ENCODE measurements at regions of chr14 and their contacts with region 1.

Region 1: GRCh38 chr14:63543000-63543825 is at the start of gene PPP2R5E:
- DNase-seq: peak; percentile 99
- H3K4me3 ChIP-seq: peak within 1 kb of the TSS; percentile 72 to 100 (median 94)
- H3K27ac ChIP-seq: peak within 1 kb of the TSS; percentile 86 to 97 (median 96)
- H3K4me1 ChIP-seq: peaks cover 0 to 34% (median 19%) of the 10 kb centered on the region in 4 donors
- H3K27me3 ChIP-seq: no peaks in the 10 kb centered on the region
- CTCF ChIP-seq: no peak
- EP300 ChIP-seq: no peak
- POLR2A ChIP-seq: peak; percentile 66 to 74
- total RNA-seq, gene PPP2R5E: 23.7 to 28.9 (median 25.4) TPM

Region 2: GRCh38 chr14:63388763-63389431 is 154.3 kb before region 1 on chr14:
- intact Hi-C with region 1: loop called (anchors 1 kb)
- DNase-seq: peak; percentile 78
- H3K4me3 ChIP-seq: no peak overlapping the region
- H3K27ac ChIP-seq: no peak overlapping the region
- H3K4me1 ChIP-seq: no peaks in the 10 kb centered on the region
- H3K27me3 ChIP-seq: no peaks in the 10 kb centered on the region
- CTCF ChIP-seq: peak; percentile 74 to 80 (median 76)
- EP300 ChIP-seq: no peak
- POLR2A ChIP-seq: no peak

Region 3: DNA sequence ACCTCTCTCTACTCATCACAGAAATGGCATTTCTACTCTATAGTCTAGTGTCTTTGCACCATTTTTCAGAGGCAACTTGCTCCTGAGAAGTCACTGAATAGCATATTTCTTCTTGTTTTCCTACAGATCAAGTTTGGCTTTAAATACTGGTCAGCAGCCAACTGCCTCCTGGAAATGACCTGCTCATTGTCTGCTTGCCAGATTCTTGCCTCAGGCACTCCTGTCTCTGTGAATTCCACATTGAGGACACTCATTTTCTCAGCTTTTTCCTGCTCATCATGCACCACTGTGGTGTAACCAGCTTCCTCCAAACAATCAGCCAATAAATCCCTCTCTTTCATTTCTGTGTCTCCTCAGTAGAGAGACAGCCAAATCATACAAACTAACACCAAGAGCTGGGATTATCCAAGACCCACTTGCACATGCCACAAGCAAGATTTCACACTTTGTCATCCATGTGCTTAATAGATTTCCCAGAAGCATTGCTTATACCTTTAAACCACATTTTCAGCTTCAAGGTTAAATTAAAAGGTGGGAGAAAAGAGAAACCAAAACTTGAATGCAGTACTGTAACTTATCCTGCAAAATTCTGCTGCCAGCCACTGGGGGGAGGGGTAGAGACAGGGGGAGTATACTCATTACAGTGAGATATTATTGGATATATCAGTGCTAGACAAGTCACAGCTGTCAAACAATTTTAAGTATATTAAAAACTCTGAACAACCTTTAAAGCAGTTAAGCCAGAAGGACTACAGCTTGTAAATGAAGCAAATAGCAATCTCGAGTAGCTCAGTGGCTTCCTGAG is 105.1 kb before region 1 on chr14:
- intact Hi-C with region 1: loop called (anchors 5 kb)
- DNase-seq: peak; percentile 85
- H3K4me3 ChIP-seq: peak overlapping the region in 1 of 4 donors; percentile 30
- H3K27ac ChIP-seq: peak overlapping the region; percentile 69 to 81 (median 79)
- H3K4me1 ChIP-seq: peaks cover 0 to 71% (median 55%) of the 10 kb centered on the region in 4 donors
- H3K27me3 ChIP-seq: no peaks in the 10 kb centered on the region
- CTCF ChIP-seq: peak in 3 of 4 experiments; percentile 12 to 14 (median 12)
- EP300 ChIP-seq: peak in 2 of 4 donors; percentile 8 to 30
- POLR2A ChIP-seq: no peak

Region 4: GRCh38 chr14:63478010-63478409 is 65.2 kb before region 1 on chr14:
- intact Hi-C with region 1: no loop called
- DNase-seq: no peak
- H3K4me3 ChIP-seq: peak overlapping the region in 1 of 4 donors; percentile 7
- H3K27ac ChIP-seq: peak overlapping the region in 1 of 4 donors; percentile 32
- H3K4me1 ChIP-seq: peaks cover 0 to 50% (median 38%) of the 10 kb centered on the region in 4 donors
- H3K27me3 ChIP-seq: no peaks in the 10 kb centered on the region
- CTCF ChIP-seq: no peak
- EP300 ChIP-seq: no peak
- POLR2A ChIP-seq: no peak

Region 5: DNA sequence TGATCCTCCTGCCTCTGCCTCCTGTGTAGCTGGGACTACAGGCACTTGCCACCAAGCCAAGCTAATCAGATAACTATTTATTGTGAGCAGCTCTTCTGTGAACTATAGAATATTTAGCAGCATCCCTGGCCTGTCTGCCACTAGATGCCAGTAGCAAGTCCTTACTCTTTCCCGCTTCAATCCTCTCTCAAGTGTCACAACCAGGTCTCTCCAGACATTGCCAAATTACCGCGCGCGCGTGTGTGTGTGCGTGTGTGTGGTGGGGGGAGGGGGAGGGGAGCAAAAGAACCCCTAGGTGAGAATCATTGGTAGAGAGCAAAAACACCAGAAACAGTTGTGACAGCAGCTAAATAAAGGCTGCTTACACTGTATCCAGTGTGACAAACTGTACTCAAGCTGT is 50.0 kb before region 1 on chr14:
- intact Hi-C with region 1: loop called (anchors 5 kb)
- DNase-seq: no peak
- H3K4me3 ChIP-seq: no peak overlapping the region
- H3K27ac ChIP-seq: peak overlapping the region in 2 of 4 donors; percentile 1 to 48
- H3K4me1 ChIP-seq: peaks cover 0 to 61% (median 49%) of the 10 kb centered on the region in 4 donors
- H3K27me3 ChIP-seq: no peaks in the 10 kb centered on the region
- CTCF ChIP-seq: no peak
- EP300 ChIP-seq: no peak
- POLR2A ChIP-seq: no peak

Region 6: DNA sequence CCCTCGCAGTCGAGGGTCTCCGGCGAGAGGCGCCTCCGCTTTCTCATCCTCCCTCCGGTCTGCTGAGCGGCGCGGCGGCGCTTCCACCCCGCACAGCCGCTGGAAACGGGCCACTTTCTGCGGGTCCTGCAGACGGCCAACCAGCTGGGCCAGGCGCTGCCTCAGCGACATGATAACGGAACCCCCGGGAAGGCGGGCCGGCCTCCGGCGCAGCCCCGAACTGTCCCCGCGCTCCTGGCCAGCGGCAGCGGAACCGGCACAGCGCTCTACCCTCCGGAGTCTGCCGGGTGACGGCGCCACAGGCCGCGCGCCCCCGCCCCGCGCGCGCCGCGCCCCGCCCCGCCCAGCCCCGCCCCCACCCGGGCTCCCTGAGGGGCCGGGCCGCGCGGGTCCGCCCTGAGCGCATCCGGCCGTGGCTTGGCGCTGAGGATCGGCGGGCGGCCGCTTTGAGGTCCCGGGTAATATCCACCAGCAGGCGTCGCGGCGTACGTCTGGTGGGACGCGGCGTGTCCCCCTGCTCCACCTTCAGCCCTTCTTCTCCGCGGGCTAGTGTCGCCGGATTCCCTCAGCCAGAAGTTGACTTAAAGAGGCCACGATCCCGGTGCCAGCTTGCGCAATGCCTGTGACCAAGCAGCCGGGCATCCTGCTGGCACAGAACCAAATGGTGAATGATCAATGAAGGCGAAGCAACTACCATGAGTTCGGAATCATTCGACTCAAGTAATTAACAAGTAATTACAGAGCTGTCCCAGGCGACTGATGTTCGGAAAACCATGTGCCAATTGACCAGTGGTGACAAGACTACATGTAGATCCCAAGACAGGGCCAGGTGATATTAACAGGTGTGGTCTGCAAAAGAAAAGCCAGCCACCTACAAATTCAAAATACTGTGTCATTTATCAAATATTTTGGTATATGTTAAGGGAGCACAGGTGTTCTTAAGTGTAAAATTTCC is 184.8 kb after region 1 on chr14 and contains the start of gene SGPP1:
- intact Hi-C with region 1: loop called (anchors 5 kb)
- DNase-seq: peak; percentile 89
- H3K4me3 ChIP-seq: peak within 1 kb of the TSS; percentile 92 to 100 (median 96)
- H3K27ac ChIP-seq: peak within 1 kb of the TSS; percentile 86 to 93 (median 93)
- H3K4me1 ChIP-seq: peaks cover 0 to 25% (median 17%) of the 10 kb centered on the region in 4 donors
- H3K27me3 ChIP-seq: no peaks in the 10 kb centered on the region
- CTCF ChIP-seq: peak in 3 of 4 experiments; percentile 13 to 36 (median 32)
- EP300 ChIP-seq: no peak
- POLR2A ChIP-seq: peak; percentile 30 to 33
- total RNA-seq, gene SGPP1: 18.2 to 20.9 (median 18.9) TPM